Left ventricle myocardium inferior (tissue), 1 donor: ENCODE measurements at regions of chr3 and their contacts with region 1.

Region 1: GRCh38 chr3:170021083-170021482 is 16.7 kb upstream of the GPR160 start:
- DNase-seq: no peak
- H3K4me3 ChIP-seq: no peak overlapping the region
- H3K27ac ChIP-seq: no peak overlapping the region
- H3K4me1 ChIP-seq: no peaks in the 10 kb centered on the region
- H3K27me3 ChIP-seq: peaks cover 11% of the 10 kb centered on the region
- CTCF ChIP-seq: peak; percentile 39

Region 2: GRCh38 chr3:169863458-169863899 is 157.6 kb before region 1 on chr3:
- intact Hi-C with region 1: loop called (anchors 10 kb)
- DNase-seq: peak; percentile 33
- H3K4me3 ChIP-seq: no peak overlapping the region
- H3K27ac ChIP-seq: no peak overlapping the region
- H3K4me1 ChIP-seq: peaks cover 5% of the 10 kb centered on the region
- H3K27me3 ChIP-seq: peaks cover 7% of the 10 kb centered on the region
- CTCF ChIP-seq: peak; percentile 93